ENCODE measurements at regions of chr19 and their contacts with region 1.

Region 1: GRCh38 chr19:49533551-49534488 is 6.0 kb downstream of the RCN3 start:
- DNase-seq: peak; percentile 84
- CTCF ChIP-seq: peak; percentile 13

Region 2: GRCh38 chr19:49463965-49464735 is 69.7 kb before region 1 on chr19:
- CTCF ChIA-PET with region 1: no interaction called
- POLR2A ChIA-PET with region 1: no interaction called
- DNase-seq: no peak
- CTCF ChIP-seq: no peak

Region 3: GRCh38 chr19:49502866-49503581 is 30.8 kb before region 1 on chr19:
- CTCF ChIA-PET with region 1: interaction called, 16 read pairs
- POLR2A ChIA-PET with region 1: no interaction called
- DNase-seq: no peak
- CTCF ChIP-seq: peak; percentile 59